ENCODE measurements at regions of chr7 and their contacts with region 1.

Region 1: DNA sequence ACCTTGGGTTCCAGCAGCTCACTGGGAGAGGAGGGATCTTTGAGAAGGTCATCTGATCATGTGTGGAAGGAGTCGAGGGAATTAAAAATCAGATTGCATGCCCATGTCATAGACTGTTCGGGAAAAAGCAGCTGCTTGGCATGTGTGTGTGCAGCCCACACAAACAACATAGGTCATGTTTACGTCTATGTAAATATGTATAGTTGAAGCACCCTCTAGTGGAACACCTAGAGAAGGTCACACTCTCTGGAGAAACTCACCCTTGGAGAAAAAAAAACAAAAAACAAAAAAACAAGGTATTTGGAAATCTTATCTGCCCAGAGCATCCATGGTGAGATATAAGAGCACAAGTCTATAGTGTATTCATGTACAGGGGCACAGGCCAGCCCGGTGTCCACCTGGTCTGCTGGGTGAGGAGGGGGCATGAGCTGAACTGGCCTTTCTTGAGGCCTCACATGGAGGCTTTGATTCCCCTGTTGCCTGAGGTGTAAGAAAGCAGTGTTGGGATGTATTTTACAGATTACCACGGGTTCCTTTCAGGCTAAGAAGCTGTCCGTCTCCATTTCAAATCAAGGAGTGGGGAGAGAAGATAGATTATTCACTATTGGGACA is 98.0 kb downstream of the NPY start:
- DNase-seq: peak; percentile 58
- H3K4me3 ChIP-seq: no peak overlapping the region
- H3K27ac ChIP-seq: no peak overlapping the region
- H3K4me1 ChIP-seq: no peaks in the 10 kb centered on the region
- H3K27me3 ChIP-seq: no peaks in the 10 kb centered on the region
- CTCF ChIP-seq: peak; percentile 77

Region 2: GRCh38 chr7:23863209-23863798 is 518.7 kb before region 1 on chr7:
- CTCF ChIA-PET with region 1: interaction called, 3 read pairs
- POLR2A ChIA-PET with region 1: no interaction called
- intact Hi-C with region 1: loop called (anchors 1 kb)
- DNase-seq: peak; percentile 65
- H3K4me3 ChIP-seq: no peak overlapping the region
- H3K27ac ChIP-seq: no peak overlapping the region
- H3K4me1 ChIP-seq: no peaks in the 10 kb centered on the region
- H3K27me3 ChIP-seq: no peaks in the 10 kb centered on the region
- CTCF ChIP-seq: peak; percentile 77

Region 3: DNA sequence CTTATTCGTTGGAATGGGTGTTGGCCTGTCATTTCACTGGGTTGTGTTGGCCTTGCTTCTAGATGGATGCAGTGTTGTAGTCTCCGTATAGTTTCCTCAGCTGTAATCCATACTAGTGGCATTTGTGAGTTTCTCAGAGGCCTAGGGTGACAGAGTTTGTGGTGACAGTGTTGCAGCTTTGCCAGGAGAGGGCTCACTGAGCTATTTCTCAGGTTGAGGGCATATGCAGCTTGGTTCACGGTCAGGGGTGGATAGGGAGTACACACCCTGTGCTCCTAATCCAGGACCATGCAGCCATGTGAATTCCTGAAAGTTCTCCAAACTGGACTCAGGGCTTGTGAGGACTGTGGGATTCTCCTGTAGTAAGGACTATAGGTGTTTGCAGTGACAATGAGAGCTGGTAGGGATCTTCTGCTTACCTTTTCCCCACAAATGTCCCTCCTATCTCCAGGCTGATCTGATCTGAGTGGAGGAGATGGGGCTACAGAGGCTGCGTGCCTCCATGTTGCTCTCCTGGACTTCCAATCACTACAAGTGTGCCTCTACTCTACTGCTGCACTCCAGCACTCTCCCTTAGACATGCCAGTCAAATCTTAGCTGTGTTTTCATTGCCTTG is 443.0 kb before region 1 on chr7:
- CTCF ChIA-PET with region 1: interaction called, 9 read pairs
- POLR2A ChIA-PET with region 1: no interaction called
- intact Hi-C with region 1: loop called (anchors 2 kb)
- DNase-seq: peak; percentile 84
- H3K4me3 ChIP-seq: no peak overlapping the region
- H3K27ac ChIP-seq: no peak overlapping the region
- H3K4me1 ChIP-seq: no peaks in the 10 kb centered on the region
- H3K27me3 ChIP-seq: no peaks in the 10 kb centered on the region
- CTCF ChIP-seq: peak; percentile 83

Region 4: GRCh38 chr7:24075426-24075810 is 306.6 kb before region 1 on chr7:
- CTCF ChIA-PET with region 1: no interaction called
- POLR2A ChIA-PET with region 1: no interaction called
- intact Hi-C with region 1: loop called (anchors 5 kb)
- DNase-seq: peak; percentile 34
- H3K4me3 ChIP-seq: no peak overlapping the region
- H3K27ac ChIP-seq: no peak overlapping the region
- H3K4me1 ChIP-seq: peaks cover 30% of the 10 kb centered on the region
- H3K27me3 ChIP-seq: no peaks in the 10 kb centered on the region
- CTCF ChIP-seq: no peak

Region 5: DNA sequence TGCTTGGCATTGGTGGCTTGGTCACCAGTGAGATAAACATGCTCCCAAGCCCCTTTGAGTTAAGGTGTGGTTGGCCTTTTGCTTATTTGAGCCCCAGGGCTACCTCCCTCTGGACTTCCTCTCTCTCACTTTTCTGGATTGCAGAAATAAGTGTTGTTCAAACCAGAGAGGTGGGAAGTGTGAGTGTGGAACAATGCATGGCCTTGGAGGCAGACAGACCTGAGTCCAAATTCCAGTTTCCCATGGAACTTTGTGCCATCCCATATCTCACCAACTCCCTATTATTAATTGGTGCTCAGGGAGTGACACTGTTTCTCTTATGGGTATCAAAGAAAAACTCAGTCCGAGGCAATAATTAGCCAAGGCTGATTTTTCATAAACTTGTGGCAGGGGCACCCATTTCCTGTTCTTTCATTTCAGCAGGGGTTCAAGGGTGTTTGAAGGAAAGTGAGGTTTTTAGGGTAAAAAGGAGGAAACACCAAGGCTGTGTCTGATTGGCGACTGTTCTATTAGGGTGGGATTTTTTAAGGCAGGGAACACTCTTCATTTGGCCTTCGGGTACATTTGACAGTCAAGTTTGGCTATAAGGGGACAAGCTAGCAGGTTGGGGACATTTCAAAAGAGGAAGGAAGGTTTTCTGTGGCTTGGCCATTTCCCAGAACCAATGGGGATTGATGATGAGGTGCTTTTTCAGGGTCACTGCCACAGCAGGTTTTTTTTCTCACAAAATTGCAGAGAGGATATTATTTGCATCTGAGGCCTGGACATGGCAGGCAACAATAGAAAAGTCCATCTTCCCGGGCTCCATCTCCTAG is 246.8 kb before region 1 on chr7:
- CTCF ChIA-PET with region 1: no interaction called
- POLR2A ChIA-PET with region 1: no interaction called
- intact Hi-C with region 1: loop called (anchors 10 kb)
- DNase-seq: no peak
- H3K4me3 ChIP-seq: no peak overlapping the region
- H3K27ac ChIP-seq: no peak overlapping the region
- H3K4me1 ChIP-seq: peaks cover 5% of the 10 kb centered on the region
- H3K27me3 ChIP-seq: no peaks in the 10 kb centered on the region
- CTCF ChIP-seq: no peak

Region 6: GRCh38 chr7:24290004-24290641 is 91.9 kb before region 1 on chr7:
- CTCF ChIA-PET with region 1: interaction called, 3 read pairs
- POLR2A ChIA-PET with region 1: no interaction called
- intact Hi-C with region 1: loop called (anchors 5 kb)
- DNase-seq: peak; percentile 78
- H3K4me3 ChIP-seq: no peak overlapping the region
- H3K27ac ChIP-seq: no peak overlapping the region
- H3K4me1 ChIP-seq: peaks cover 19% of the 10 kb centered on the region
- H3K27me3 ChIP-seq: no peaks in the 10 kb centered on the region
- CTCF ChIP-seq: peak; percentile 63

Region 7: DNA sequence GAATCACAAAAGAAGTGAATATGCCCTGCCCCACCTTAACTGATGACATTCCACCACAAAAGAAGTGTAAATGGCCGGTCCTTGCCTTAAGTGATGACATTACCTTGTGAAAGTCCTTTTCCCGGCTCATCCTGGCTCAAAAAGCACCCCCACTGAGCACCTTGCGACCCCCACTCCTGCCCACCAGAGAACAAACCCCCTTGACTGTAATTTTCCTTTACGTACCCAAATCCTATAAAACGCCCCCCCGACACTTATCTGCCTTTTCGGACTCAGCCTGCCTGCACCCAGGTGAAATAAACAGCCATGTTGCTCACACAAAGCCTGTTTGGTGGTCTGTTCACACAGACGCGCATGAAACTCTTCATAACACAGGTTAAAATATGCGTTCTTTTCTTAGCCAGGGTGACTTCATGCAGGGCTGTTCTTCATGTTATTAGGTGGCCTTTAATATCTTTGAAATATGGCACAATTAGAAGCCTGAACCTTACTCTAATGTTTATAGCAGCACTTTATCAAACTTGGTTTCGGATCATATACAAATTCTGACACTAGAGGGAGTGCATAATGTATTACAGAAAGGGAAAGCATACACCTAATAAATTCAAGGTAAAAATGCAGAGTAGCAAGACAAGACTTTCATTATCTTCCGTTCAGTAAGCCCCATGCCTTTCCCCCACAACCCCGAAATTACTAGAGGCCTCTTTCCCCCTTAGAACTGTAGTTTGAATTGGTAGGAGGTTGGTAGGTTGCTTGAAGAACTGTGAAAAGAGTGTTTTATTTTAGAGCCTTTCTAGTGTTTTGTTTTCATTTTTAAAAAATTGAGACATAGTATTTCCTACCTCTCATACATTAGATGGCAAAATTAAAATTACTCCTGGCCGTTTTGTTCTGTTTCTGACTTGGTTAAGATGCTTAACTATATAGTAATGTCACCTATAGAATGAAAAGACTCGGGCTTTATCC is 19.9 kb after region 1 on chr7:
- CTCF ChIA-PET with region 1: no interaction called
- POLR2A ChIA-PET with region 1: no interaction called
- intact Hi-C with region 1: no loop called
- DNase-seq: peak; percentile 41
- H3K4me3 ChIP-seq: peak overlapping the region; percentile 21
- H3K27ac ChIP-seq: no peak overlapping the region
- H3K4me1 ChIP-seq: peaks cover 39% of the 10 kb centered on the region
- H3K27me3 ChIP-seq: no peaks in the 10 kb centered on the region
- CTCF ChIP-seq: peak; percentile 65

Measured in A673 (cell line).